A673 (cell line): ENCODE measurements at regions of chr1 and their contacts with region 1.

Region 1: DNA sequence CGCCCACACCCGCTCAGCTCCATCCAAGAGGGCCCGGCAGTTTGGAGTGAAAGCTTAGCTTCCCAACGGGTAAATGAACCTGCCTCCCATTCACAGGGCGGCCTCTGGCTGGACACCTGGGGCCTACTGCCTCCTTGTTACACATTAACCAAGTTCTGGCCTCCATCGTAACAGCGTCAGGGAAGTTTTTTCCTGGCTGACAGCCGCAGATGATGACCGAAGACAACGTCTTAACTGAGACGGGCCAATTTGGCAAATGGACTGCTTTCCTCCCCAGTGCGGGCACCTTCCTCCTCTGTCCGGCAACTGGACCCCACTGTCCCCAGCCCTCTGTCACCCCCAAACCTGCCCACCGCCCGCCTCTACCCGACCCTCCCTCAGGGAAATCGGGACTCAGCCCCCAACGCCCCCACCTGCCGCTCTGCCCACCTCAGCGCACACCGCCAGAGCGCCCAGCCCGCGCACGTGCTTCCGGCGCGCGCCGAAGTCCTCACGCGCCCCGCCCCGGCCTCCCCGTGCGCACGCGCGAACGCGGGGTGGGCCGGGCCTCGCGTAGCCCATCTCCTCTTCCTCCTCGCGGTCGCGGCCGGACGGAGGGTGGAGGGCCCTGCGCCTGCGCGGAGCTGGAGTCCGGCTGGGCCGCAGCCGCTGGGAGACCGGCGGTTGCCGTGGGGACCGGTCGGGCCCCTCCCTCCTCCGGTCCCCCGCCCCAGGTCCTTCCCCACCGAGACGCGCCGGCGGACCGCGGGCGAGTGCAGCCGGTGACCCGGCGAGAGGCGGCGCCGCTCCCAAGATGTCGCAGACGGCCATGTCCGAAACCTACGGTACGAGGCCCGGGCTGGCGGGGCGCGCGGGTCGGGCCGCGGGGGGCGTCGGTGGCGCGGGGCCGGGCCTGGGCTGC is at the start of gene RAB4A:
- DNase-seq: peak; percentile 88
- H3K4me3 ChIP-seq: peak within 1 kb of the TSS; percentile 84
- H3K27ac ChIP-seq: peak within 1 kb of the TSS; percentile 56
- H3K4me1 ChIP-seq: peaks cover 6% of the 10 kb centered on the region
- H3K27me3 ChIP-seq: no peaks in the 10 kb centered on the region
- CTCF ChIP-seq: no peak
- total RNA-seq, gene RAB4A: 46.5 and 51.6 TPM in 2 replicates

Region 2: DNA sequence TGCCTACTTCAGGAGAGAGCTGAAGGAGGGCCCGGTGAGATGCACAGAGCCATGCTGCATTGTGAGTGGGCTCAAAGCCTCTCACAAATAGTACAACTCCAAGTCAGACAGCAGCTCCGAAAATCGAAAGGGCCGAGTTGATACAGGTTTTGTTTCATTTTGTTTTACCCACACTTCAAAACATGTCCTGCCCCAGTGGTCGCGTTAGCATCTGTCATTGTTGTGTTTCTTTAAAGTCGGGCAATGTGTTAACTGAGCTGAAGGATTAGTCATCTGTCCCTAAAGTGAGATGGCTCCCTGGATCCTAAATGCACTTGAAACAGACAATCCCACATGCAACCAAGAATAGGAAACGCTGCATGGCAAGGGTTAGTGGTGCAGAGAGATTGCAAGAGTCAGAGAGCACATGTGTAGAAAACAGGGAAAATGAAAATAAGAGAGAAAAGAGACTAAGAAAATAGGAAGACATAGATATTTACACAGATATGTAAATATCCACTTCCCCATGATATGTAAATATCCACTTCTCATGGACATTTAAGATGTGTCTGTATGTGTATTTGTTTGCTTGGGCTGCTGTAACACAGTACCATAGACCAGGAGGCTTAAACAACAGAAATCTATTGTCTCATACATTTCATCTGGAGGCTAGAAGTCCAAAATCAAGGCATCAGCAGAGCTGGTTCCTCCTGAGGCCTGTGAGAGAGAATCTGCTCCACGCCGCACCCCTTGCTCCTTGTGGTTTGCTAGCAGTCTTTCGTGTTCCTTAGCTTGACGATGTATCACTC is 131.3 kb before region 1 on chr1:
- CTCF ChIA-PET with region 1: no interaction called
- POLR2A ChIA-PET with region 1: no interaction called
- intact Hi-C with region 1: no loop called
- DNase-seq: no peak
- H3K4me3 ChIP-seq: no peak overlapping the region
- H3K27ac ChIP-seq: no peak overlapping the region
- H3K4me1 ChIP-seq: no peaks in the 10 kb centered on the region
- H3K27me3 ChIP-seq: no peaks in the 10 kb centered on the region
- CTCF ChIP-seq: no peak

Region 3: DNA sequence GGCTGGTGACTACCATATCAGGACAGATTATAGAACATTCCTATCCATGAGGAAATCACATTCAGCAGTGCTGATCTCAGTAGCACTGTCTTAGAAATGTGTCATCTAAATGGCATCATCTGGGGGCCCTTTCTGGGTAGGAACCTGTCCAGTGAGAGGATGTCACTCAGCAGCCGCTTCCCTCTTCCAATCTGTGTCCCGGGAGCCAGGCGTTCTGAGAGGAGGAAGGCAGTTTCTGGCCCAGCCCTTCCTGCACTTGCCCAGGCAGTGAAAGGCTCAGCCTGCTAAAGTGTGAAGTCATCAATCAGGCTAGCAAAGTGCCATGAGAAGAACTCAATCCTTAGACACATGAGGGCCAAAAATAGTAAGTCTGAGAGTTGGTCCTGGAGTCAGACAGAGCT is 25.7 kb after region 1 on chr1:
- CTCF ChIA-PET with region 1: no interaction called
- POLR2A ChIA-PET with region 1: no interaction called
- intact Hi-C with region 1: no loop called
- DNase-seq: no peak
- H3K4me3 ChIP-seq: no peak overlapping the region
- H3K27ac ChIP-seq: no peak overlapping the region
- H3K4me1 ChIP-seq: no peaks in the 10 kb centered on the region
- H3K27me3 ChIP-seq: no peaks in the 10 kb centered on the region
- CTCF ChIP-seq: no peak

Region 4: DNA sequence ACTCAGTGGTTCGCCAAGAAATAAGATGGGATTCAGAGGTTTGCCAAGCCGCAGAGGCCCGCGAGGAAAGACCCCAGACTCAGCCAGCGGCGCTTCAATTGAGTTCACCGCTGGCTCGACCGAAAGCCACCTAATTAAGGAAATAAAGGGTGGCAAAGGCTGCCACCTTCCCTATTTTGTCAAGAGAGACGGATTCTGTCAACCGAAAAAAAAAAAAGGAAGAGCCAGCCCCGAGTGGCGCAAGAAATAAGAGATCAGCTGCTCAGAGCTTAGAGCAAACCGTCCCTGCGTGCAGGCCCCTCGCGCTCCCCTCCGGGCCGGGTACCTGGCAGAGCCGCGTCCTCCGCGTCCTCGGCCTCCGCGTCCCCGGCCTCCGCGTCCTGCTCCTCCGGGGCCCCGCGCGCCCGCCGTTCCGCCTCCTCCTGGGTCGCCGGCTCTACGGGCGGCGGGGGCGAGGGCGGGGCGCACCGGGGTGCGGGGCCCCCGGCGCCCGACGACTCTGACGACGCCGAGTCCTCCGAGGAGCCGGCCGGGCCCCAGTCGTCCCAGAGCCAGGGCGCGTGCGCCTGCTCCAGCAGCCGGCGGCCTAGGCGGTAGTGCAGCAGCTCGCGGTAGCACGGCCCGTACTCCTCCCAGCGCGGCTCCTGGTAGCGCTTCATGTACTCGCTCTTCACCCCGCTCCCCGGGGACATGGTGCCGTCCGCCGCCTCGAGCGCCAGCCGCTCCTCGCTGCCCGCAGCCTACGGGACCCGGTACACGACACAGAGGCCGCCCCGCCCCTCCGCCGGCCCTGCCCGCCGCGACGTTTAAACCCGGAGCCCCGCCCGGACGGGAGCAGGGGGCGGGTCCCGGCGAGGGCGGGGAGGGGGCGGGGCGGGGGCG is 71.2 kb after region 1 on chr1:
- CTCF ChIA-PET with region 1: no interaction called
- POLR2A ChIA-PET with region 1: no interaction called
- intact Hi-C with region 1: loop called (anchors 5 kb)
- DNase-seq: peak; percentile 86
- H3K4me3 ChIP-seq: peak overlapping the region; percentile 70
- H3K27ac ChIP-seq: peak overlapping the region; percentile 81
- H3K4me1 ChIP-seq: no peaks in the 10 kb centered on the region
- H3K27me3 ChIP-seq: no peaks in the 10 kb centered on the region
- CTCF ChIP-seq: no peak

Region 5: DNA sequence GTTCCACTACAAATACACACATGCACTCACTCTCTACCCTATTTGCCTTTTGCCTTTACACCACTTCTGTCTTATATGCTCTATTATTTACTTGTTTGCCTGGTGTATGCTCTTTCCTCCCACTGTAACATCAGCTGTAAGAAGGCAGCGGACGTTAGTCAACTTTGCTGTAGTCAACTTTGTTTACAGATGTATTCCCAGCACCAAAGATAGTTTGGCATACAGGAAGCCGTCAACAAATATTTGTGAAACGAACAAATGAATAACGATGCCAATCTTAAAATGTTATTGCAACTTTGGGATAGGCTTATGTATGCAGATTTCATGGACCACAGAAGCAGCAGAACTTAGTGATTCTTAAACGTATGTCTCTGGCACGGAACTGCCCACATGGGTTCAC is 658.0 kb after region 1 on chr1:
- CTCF ChIA-PET with region 1: no interaction called
- POLR2A ChIA-PET with region 1: no interaction called
- intact Hi-C with region 1: no loop called
- DNase-seq: no peak
- H3K4me3 ChIP-seq: no peak overlapping the region
- H3K27ac ChIP-seq: no peak overlapping the region
- H3K4me1 ChIP-seq: no peaks in the 10 kb centered on the region
- H3K27me3 ChIP-seq: no peaks in the 10 kb centered on the region
- CTCF ChIP-seq: no peak